Gastrocnemius medialis (tissue), 4 donors: ENCODE measurements at regions of chr5 and their contacts with region 1.

Region 1: GRCh38 chr5:65562731-65563701 is at the starts of genes CENPK and PPWD1:
- DNase-seq: peak; percentile 90 to 91
- ATAC-seq: peak; percentile 100
- H3K4me3 ChIP-seq: peak within 1 kb of the TSS; percentile 65 to 90 (median 80)
- H3K27ac ChIP-seq: peak within 1 kb of the TSS; percentile 76 to 85 (median 82)
- H3K4me1 ChIP-seq: peaks cover 22 to 24% of the 10 kb centered on the region in 2 donors
- H3K27me3 ChIP-seq: no peaks in the 10 kb centered on the region
- CTCF ChIP-seq: no peak
- POLR2A ChIP-seq: peak; percentile 62 to 63
- total RNA-seq, gene CENPK: 0.56 TPM in 1 of 4 donors, not detected in the others
- total RNA-seq, gene PPWD1: 14.1 to 18.8 (median 16.6) TPM

Region 2: DNA sequence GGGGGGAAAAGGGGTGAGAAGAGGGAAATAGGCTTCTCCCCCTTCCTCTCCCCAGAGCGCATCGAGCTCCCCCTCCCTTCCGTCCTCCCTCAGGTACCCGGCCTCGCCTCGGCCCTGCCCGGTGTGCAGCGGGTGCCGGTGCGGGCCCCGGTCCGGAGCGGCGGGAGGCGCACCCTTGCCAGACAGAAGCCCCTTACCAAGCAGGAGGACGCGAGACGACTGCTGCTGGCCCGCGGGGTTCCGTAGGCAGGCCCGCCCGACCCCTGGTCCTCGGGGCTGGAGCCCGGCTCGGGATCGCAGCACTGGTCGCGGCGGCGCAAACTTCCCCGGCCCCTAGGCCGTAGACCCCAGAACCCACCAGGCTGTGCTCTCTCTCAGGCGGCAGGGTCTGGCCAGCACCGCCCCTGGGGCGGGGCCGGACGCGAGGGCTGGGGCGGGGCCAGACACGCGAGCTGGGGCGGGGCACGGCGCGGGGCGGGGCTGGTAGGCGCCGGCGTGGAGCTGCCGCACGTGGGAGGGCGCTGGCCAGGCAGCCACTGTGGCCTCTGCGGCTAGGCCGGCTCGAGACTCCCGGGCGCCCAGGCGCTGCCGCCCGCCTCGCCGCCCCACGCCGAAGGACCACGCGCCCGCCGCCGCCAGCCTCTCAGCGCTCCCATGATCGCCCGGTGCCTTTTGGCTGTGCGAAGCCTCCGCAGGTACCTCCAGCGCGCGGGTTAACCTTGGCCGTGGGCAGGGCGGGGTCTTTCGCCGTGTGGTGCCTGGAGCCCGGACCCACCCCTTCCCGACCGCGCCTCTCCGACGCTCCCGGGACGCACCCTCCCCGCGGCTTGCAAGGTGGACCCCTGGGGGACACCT is 158.9 kb after region 1 on chr5 and contains the starts of genes NLN and SGTB:
- in situ Hi-C with region 1: no loop called
- intact Hi-C with region 1: loop called (anchors 1 kb)
- DNase-seq: peak; percentile 74 to 79
- ATAC-seq: peak; percentile 86 to 91
- H3K4me3 ChIP-seq: peak within 1 kb of the TSS; percentile 88 to 100 (median 93)
- H3K27ac ChIP-seq: peak within 1 kb of the TSS; percentile 85 to 90 (median 88)
- H3K4me1 ChIP-seq: peaks cover 28 to 52% of the 10 kb centered on the region in 2 donors
- H3K27me3 ChIP-seq: no peaks in the 10 kb centered on the region
- CTCF ChIP-seq: no peak
- POLR2A ChIP-seq: peak; percentile 63 to 72
- total RNA-seq, gene NLN: 20.4 to 29.9 (median 27.9) TPM
- total RNA-seq, gene SGTB: 3.6 to 6.6 (median 4.3) TPM